ENCODE measurements at regions of chr1 and their contacts with region 1.

Region 1: DNA sequence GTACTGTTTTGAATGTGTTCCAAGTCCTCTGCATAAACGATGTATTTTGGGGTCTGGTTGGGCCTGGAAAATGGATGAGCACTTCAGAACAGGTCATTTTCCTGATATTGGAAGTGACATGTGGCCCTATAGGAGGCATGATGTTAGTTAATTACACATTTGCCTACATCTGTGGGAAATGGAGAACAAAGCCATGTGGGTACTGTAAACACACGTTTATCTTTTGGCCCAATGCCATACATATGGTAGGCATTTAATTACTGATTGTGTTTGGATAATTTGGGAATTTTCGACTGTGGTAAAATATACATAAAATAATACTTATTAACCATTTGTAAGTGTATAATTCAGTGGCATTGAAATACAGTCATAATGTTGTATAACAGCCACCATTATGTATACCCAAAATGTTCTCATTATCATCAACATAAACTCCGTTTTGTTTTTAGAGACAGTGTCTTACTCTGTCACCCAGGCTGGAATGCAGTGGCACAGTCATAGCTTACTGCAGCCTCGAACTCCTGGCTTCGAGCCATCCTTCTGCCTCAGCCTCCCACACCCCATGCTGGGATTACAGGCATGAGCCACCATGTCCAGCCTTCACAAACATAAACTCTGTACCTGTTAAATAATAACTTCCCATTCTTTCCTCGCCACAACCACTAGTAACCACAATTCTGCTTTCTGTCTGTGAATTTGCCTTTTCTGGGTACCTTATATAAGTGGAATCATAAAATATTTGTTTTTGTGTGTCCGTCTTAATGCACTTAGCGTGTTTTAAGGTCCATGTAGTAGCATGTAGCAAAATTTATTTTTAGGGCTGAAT is 11.9 kb upstream of the RNPEP start:
- DNase-seq: no peak
- H3K4me3 ChIP-seq: no peak overlapping the region
- H3K27ac ChIP-seq: no peak overlapping the region
- H3K4me1 ChIP-seq: no peaks in the 10 kb centered on the region
- H3K27me3 ChIP-seq: no peaks in the 10 kb centered on the region
- CTCF ChIP-seq: no peak
- EP300 ChIP-seq: no peak
- POLR2A ChIP-seq: no peak
- RAD21 ChIP-seq: no peak

Region 2: DNA sequence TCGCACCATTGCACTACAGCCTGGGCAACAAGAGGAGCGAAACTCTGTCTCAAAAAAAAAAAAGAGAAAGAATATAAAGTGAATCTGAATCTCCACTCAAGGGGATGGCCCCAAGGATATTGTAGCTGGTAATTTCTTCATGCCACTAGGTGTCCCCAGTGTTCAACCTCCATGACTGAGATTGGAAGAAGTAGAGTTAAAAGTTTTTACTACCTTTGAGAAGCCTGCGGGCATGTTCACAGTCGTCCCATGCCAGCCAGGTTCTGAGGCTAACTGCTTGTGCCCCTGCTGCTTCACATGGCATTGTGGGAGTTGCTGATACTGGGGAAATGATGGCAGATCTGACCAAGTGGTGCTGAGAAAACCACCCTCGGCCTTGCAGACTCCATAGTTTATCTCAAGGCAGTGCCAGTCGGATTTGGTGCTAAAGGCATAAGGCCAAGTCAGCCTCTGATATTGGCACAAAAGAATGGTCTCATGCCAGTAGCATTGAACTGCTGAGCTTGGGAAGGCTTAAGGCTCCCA is 92.6 kb before region 1 on chr1:
- CTCF ChIA-PET with region 1: interaction called, 19 read pairs
- POLR2A ChIA-PET with region 1: interaction called, 3 read pairs
- DNase-seq: peak in 1 of 2 experiments; percentile 69
- H3K4me3 ChIP-seq: no peak overlapping the region
- H3K27ac ChIP-seq: no peak overlapping the region
- H3K4me1 ChIP-seq: peaks cover 0 to 4% (median 0%) of the 10 kb centered on the region in 4 experiments; a peak in 3 of 7 replicates
- H3K27me3 ChIP-seq: no peaks in the 10 kb centered on the region
- CTCF ChIP-seq: peak in 2 of 3 experiments; percentile 57 to 67; a peak in 3 of 4 replicates
- EP300 ChIP-seq: no peak
- POLR2A ChIP-seq: peak in 1 of 2 experiments; percentile 31; a peak in 2 of 3 replicates
- RAD21 ChIP-seq: peak; percentile 68 to 75

Region 3: GRCh38 chr1:201955009-201955728 is 15.4 kb before region 1 on chr1 and contains the start of gene TIMM17A:
- CTCF ChIA-PET with region 1: interaction called, 4 read pairs
- POLR2A ChIA-PET with region 1: interaction called, 13 read pairs
- DNase-seq: peak; percentile 77 to 93
- H3K4me3 ChIP-seq: peak within 1 kb of the TSS; percentile 83 to 100 (median 94)
- H3K27ac ChIP-seq: peak within 1 kb of the TSS; percentile 90
- H3K4me1 ChIP-seq: peaks cover 0 to 3% (median 0%) of the 10 kb centered on the region in 4 experiments; a peak in 1 of 7 replicates
- H3K27me3 ChIP-seq: no peaks in the 10 kb centered on the region
- CTCF ChIP-seq: no peak
- EP300 ChIP-seq: no peak
- POLR2A ChIP-seq: peak in 1 of 2 experiments; percentile 91
- RAD21 ChIP-seq: no peak; a peak in 1 of 4 replicates
- total RNA-seq, gene TIMM17A: 54.3 and 57.1 TPM in 2 replicates

Region 4: GRCh38 chr1:201982623-201983379 is 12.3 kb after region 1 on chr1 and contains the start of gene RNPEP:
- CTCF ChIA-PET with region 1: interaction called, 7 read pairs
- POLR2A ChIA-PET with region 1: interaction called, 11 read pairs
- DNase-seq: peak in 1 of 2 experiments; percentile 85
- H3K4me3 ChIP-seq: peak within 1 kb of the TSS; percentile 78 to 87 (median 82)
- H3K27ac ChIP-seq: peak within 1 kb of the TSS; percentile 13; the same call in 1 of the 2 replicates
- H3K4me1 ChIP-seq: peaks cover 0 to 4% (median 2%) of the 10 kb centered on the region in 4 experiments; a peak in 5 of 7 replicates
- H3K27me3 ChIP-seq: peaks cover 0 to 3% (median 0%) of the 10 kb centered on the region in 4 experiments; a peak in 1 of 7 replicates
- CTCF ChIP-seq: peak in 1 of 3 experiments; percentile 12; a peak in 1 of 4 replicates
- EP300 ChIP-seq: 0 out of 3 replicates have a peak, but pooled peaks of 1 of the 2 experiments have one; percentile 6
- POLR2A ChIP-seq: peak; percentile 6 to 68
- RAD21 ChIP-seq: no peak
- total RNA-seq, gene RNPEP: 45.2 and 51.1 TPM in 2 replicates

Region 5: GRCh38 chr1:202034683-202035462 is 64.3 kb after region 1 on chr1:
- CTCF ChIA-PET with region 1: no interaction called
- POLR2A ChIA-PET with region 1: no interaction called
- DNase-seq: peak in 1 of 2 experiments; percentile 41
- H3K4me3 ChIP-seq: no peak overlapping the region
- H3K27ac ChIP-seq: no peak overlapping the region
- H3K4me1 ChIP-seq: peaks cover 0 to 9% (median under 1%) of the 10 kb centered on the region in 4 experiments; a peak in 3 of 7 replicates
- H3K27me3 ChIP-seq: no peaks in the 10 kb centered on the region
- CTCF ChIP-seq: no peak
- EP300 ChIP-seq: no peak
- POLR2A ChIP-seq: no peak
- RAD21 ChIP-seq: no peak

Measured in H1 (cell line).